H1 (cell line): ENCODE measurements at regions of chr3 and their contacts with region 1.

Region 1: GRCh38 chr3:126100634-126101301 is 16.8 kb upstream of the SLC41A3 start:
- DNase-seq: no peak
- H3K4me3 ChIP-seq: no peak overlapping the region
- H3K27ac ChIP-seq: no peak overlapping the region
- H3K4me1 ChIP-seq: no peaks in the 10 kb centered on the region; a peak in 1 of 7 replicates
- H3K27me3 ChIP-seq: no peaks in the 10 kb centered on the region
- CTCF ChIP-seq: no peak
- EP300 ChIP-seq: no peak
- POLR2A ChIP-seq: no peak
- RAD21 ChIP-seq: no peak

Region 2: DNA sequence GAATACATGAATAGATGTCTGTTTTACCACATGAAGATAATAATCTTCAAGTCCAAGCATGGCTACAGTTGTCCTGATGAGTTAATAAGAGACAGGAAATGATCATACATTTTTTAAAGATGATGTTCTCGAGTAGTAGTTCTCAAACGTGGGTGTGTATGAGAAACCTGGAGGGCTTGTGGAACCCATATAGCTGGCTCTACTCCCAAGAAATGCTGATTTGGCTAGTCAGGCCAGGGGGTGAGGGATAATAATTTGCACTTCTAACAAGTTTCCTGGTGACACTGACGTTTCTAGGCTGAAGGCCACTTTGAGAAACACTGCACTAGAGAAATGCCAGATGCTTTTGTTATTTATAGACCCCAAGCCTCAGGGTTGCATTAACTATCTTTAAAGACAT is 94.8 kb before region 1 on chr3:
- CTCF ChIA-PET with region 1: no interaction called
- POLR2A ChIA-PET with region 1: no interaction called
- DNase-seq: no peak
- H3K4me3 ChIP-seq: no peak overlapping the region
- H3K27ac ChIP-seq: no peak overlapping the region
- H3K4me1 ChIP-seq: no peaks in the 10 kb centered on the region
- H3K27me3 ChIP-seq: no peaks in the 10 kb centered on the region
- CTCF ChIP-seq: no peak
- EP300 ChIP-seq: no peak
- POLR2A ChIP-seq: no peak
- RAD21 ChIP-seq: no peak

Region 3: GRCh38 chr3:126087552-126088175 is 13.1 kb before region 1 on chr3:
- CTCF ChIA-PET with region 1: interaction called, 10 read pairs
- POLR2A ChIA-PET with region 1: no interaction called
- DNase-seq: no peak
- H3K4me3 ChIP-seq: no peak overlapping the region
- H3K27ac ChIP-seq: no peak overlapping the region
- H3K4me1 ChIP-seq: no peaks in the 10 kb centered on the region
- H3K27me3 ChIP-seq: no peaks in the 10 kb centered on the region; a peak in 1 of 7 replicates
- CTCF ChIP-seq: no peak
- EP300 ChIP-seq: no peak
- POLR2A ChIP-seq: no peak
- RAD21 ChIP-seq: no peak